ENCODE measurements at regions of chr20 and their contacts with region 1.

Region 1: DNA sequence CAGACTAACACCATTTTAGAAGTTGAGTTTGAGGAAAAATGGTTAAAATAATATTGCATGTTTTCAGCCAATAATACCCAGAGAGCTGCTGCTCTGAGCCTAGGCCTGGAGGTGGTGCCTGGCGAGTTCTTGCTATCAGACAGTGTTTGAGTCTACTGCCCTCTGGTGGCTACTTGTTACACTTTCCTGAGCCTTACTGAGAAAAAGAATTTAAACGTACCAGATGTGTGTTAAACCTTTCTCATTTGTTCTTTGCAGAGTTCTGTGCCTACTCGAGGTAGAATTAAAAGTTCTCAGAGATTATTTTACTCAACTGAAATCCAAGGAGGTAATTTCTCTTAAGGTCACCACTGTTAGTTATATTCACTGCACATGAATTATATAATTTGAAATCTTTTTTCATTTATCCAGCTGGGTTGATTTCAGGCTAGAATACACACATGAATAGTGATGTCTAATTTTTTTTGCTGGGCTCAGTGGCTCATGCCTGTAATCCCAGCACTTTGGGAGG is 38.2 kb downstream of the SHLD1 start:
- DNase-seq: peak; percentile 96
- H3K4me3 ChIP-seq: no peak overlapping the region
- H3K27ac ChIP-seq: peak overlapping the region; percentile 51
- H3K4me1 ChIP-seq: peaks cover 65% of the 10 kb centered on the region
- CTCF ChIP-seq: peak; percentile 99

Region 2: GRCh38 chr20:5557123-5557522 is 231.3 kb before region 1 on chr20:
- CTCF ChIA-PET with region 1: no interaction called
- POLR2A ChIA-PET with region 1: interaction called, 6 read pairs
- intact Hi-C with region 1: loop called (anchors 2 kb)
- DNase-seq: peak; percentile 75
- H3K4me3 ChIP-seq: no peak overlapping the region
- H3K27ac ChIP-seq: no peak overlapping the region
- H3K4me1 ChIP-seq: no peaks in the 10 kb centered on the region
- CTCF ChIP-seq: peak; percentile 91

Region 3: GRCh38 chr20:5608442-5609161 is 179.8 kb before region 1 on chr20:
- CTCF ChIA-PET with region 1: interaction called, 3 read pairs
- POLR2A ChIA-PET with region 1: interaction called, 4 read pairs
- intact Hi-C with region 1: loop called (anchors 5 kb)
- DNase-seq: no peak
- H3K4me3 ChIP-seq: peak overlapping the region; percentile 79
- H3K27ac ChIP-seq: peak overlapping the region; percentile 94
- H3K4me1 ChIP-seq: peaks cover 38% of the 10 kb centered on the region
- CTCF ChIP-seq: no peak

Region 4: GRCh38 chr20:5933802-5934436 is 145.5 kb after region 1 on chr20:
- CTCF ChIA-PET with region 1: no interaction called
- POLR2A ChIA-PET with region 1: no interaction called
- intact Hi-C with region 1: loop called (anchors 1 kb)
- DNase-seq: peak; percentile 84
- H3K4me3 ChIP-seq: no peak overlapping the region
- H3K27ac ChIP-seq: no peak overlapping the region
- H3K4me1 ChIP-seq: peaks cover 8% of the 10 kb centered on the region
- CTCF ChIP-seq: peak; percentile 83